ENCODE measurements at regions of chr4 and their contacts with region 1.

Region 1: GRCh38 chr4:92265798-92266197 is 38.0 kb upstream of the GRID2 start:
- DNase-seq: no peak
- ATAC-seq: no peak
- H3K4me3 ChIP-seq: no peak overlapping the region
- H3K27ac ChIP-seq: no peak overlapping the region
- H3K4me1 ChIP-seq: no peaks in the 10 kb centered on the region
- H3K27me3 ChIP-seq: no peaks in the 10 kb centered on the region

Region 2: GRCh38 chr4:92299152-92299551 is 33.4 kb after region 1 on chr4:
- intact Hi-C with region 1: loop called in 1 of 2 experiments (anchors 2 kb)
- DNase-seq: no peak
- ATAC-seq: no peak
- H3K4me3 ChIP-seq: no peak overlapping the region
- H3K27ac ChIP-seq: no peak overlapping the region
- H3K4me1 ChIP-seq: no peaks in the 10 kb centered on the region
- H3K27me3 ChIP-seq: no peaks in the 10 kb centered on the region